PC-3 (cell line): ENCODE measurements at regions of chr7 and their contacts with region 1.

Region 1: DNA sequence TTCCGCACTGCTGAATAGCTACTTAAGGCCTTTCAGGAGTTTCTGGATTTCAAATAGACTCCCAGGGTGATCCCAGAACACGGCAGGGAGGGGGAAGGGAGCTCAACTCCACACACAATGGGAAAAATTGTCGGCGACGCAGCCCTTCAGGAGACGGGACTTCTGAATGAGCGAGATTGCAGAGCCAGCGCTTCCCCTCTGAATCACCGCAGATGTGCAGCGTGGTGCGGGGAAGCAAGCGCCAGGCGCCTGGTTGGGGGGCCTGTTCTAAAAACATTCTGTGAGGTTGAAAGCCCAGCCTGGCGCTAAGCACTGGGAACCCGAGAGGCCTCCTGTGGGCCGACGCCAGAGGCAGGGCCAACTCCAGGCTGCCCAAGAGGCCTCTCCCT is 163.3 kb downstream of the MAD1L1 start:
- DNase-seq: no peak
- ATAC-seq: no peak
- H3K4me3 ChIP-seq: no peak overlapping the region
- H3K27ac ChIP-seq: no peak overlapping the region
- H3K4me1 ChIP-seq: no peaks in the 10 kb centered on the region
- H3K27me3 ChIP-seq: no peaks in the 10 kb centered on the region
- CTCF ChIP-seq: no peak

Region 2: DNA sequence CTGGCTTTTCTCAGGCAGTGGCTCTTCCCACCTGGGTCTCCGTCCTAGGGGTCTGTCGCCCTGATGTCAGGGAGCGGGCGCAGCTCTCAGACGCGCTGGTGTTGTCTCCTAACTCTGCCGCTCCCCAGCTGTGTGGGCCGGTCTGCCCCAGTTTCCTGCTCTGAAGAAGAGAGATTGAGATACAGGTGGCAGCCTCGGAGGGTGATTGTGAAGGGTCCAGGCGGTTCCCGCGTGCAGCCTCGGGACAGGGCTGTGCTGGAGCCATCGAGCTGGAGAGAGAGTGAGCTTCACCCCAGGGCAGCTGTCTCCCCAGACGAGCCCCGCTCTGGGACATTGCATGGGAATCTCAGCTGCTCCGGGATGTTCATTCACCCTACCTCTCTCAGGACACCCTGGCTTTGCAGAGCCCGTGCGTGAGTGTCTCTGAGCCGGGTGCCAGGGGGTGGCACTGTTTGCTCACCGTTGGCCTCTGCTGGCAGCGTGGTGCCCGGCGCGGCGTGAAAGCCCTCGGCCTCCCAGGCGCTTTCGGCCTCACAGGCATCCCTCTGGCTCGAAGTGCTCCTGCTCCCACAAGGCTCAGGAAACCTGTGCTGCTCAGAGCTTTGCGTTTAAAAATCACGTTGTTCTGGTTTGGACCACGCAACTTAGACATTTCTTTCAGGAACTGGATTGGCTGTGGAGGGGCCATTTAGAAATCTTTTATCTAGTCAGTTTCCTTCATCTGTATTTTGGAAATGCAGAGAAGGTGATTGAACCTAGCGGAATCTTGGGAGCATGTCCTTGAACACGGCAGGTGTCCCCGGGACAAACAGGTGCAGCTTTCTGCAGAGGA is 875.7 kb before region 1 on chr7:
- CTCF ChIA-PET with region 1: no interaction called
- POLR2A ChIA-PET with region 1: no interaction called
- intact Hi-C with region 1: no loop called
- DNase-seq: peak; percentile 77
- ATAC-seq: peak; percentile 90
- H3K4me3 ChIP-seq: peak overlapping the region; percentile 28; the same call in 1 of the 2 replicates
- H3K27ac ChIP-seq: no peak overlapping the region
- H3K4me1 ChIP-seq: peaks cover 10% of the 10 kb centered on the region; the same call in 1 of the 2 replicates
- H3K27me3 ChIP-seq: no peaks in the 10 kb centered on the region
- CTCF ChIP-seq: peak; percentile 83

Region 3: GRCh38 chr7:1720326-1720725 is 349.1 kb before region 1 on chr7:
- CTCF ChIA-PET with region 1: no interaction called
- POLR2A ChIA-PET with region 1: interaction called, 15 read pairs
- intact Hi-C with region 1: no loop called
- DNase-seq: no peak
- ATAC-seq: no peak
- H3K4me3 ChIP-seq: no peak overlapping the region
- H3K27ac ChIP-seq: no peak overlapping the region
- H3K4me1 ChIP-seq: peaks cover 22% of the 10 kb centered on the region
- H3K27me3 ChIP-seq: 0 out of 2 replicates have a peak, but pooled peaks cover 5% of the 10 kb centered on the region
- CTCF ChIP-seq: no peak